ENCODE measurements at regions of chr13 and their contacts with region 1.

Region 1: GRCh38 chr13:30341815-30342570 is 34.6 kb upstream of the KATNAL1 start:
- DNase-seq: no peak
- ATAC-seq: no peak
- H3K4me3 ChIP-seq: no peak overlapping the region
- H3K27ac ChIP-seq: no peak overlapping the region
- H3K4me1 ChIP-seq: peaks cover 20 to 40% of the 10 kb centered on the region in 2 experiments; a peak in 4 of 5 replicates
- H3K27me3 ChIP-seq: no peaks in the 10 kb centered on the region
- CTCF ChIP-seq: no peak
- EP300 ChIP-seq: no peak
- POLR2A ChIP-seq: no peak
- RAD21 ChIP-seq: no peak

Region 2: DNA sequence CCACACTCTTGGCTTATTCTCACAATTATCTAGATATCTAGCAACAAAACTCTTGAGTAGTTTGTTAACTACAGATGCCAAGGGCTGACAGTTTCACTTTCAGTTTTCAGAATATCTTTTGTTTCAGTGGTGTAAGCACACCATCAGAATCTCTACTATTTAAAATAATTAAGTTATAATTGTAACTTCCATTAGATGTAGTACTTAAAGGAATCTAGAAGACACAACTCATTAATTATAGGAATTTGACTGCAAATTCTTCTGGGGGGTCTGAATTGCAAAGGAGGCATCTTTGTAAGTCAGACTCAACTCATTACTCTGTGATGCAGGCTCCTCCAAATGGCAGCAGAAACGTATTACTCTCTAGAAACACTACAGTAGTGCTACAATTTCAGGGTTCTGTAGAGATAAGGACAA is 230.9 kb after region 1 on chr13:
- CTCF ChIA-PET with region 1: no interaction called
- POLR2A ChIA-PET with region 1: no interaction called
- in situ Hi-C with region 1: no loop called
- intact Hi-C with region 1: loop called (anchors 10 kb)
- DNase-seq: no peak
- ATAC-seq: 0 out of 3 replicates have a peak, but pooled peaks have one; percentile 40
- H3K4me3 ChIP-seq: no peak overlapping the region
- H3K27ac ChIP-seq: no peak overlapping the region
- H3K4me1 ChIP-seq: peaks cover 0 to 10% of the 10 kb centered on the region in 2 experiments; a peak in 4 of 5 replicates
- H3K27me3 ChIP-seq: no peaks in the 10 kb centered on the region; a peak in 1 of 5 replicates
- CTCF ChIP-seq: peak in 1 of 3 experiments; percentile 29; a peak in 2 of 6 replicates
- EP300 ChIP-seq: no peak
- POLR2A ChIP-seq: no peak
- RAD21 ChIP-seq: peak; percentile 33 to 41; a peak in 3 of 4 replicates